ENCODE measurements at regions of chr3 and their contacts with region 1.

Region 1: GRCh38 chr3:59027607-59028006 is 22.2 kb downstream of the CFAP20DC start:
- DNase-seq: no peak
- ATAC-seq: peak; percentile 53
- H3K4me3 ChIP-seq: no peak overlapping the region
- H3K27ac ChIP-seq: no peak overlapping the region
- H3K4me1 ChIP-seq: no peaks in the 10 kb centered on the region
- H3K27me3 ChIP-seq: no peaks in the 10 kb centered on the region
- CTCF ChIP-seq: no peak
- EP300 ChIP-seq: no peak
- POLR2A ChIP-seq: no peak
- RAD21 ChIP-seq: no peak

Region 2: DNA sequence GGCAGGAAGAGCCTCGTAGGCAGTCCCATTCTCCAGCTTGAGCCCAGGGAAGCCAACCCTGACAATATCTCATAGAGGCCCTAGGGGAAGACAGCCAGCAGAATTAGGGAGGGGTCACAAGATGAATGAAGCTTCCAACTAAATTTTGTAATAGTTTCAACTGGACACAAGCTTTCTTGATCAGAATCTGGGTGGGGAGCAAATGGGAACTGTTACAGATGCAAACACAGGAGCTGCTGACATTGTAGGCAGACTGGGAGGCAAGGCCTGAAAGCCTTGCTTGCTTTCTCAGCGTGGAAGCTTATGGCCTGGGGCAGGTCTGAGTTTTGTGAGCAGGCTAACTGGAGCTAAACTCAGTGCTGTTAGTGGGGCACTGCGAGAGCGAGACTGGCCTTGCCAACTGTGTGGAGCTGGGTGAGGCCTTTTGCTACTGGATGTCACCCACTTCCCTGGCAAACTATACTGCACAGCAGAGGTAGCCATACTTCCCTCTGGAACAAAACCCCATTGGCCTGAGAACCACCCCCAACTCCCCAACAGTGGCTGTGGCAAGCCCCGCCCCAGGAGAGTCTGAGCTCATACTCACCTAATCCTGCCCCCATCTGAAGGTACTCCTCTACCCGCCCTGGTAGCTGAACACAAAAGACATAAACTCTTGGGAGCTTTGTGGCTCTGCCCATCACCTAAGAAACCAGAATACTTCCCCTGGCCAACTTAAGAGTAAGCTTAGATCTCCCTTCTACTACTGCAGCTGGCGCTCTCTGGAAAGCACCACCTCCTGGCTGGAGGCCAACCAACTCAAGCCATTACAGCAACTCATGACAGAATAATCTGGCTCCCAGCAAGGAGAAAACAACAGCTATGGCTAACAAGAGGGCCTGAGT is 20.7 kb before region 1 on chr3:
- CTCF ChIA-PET with region 1: interaction called, 5 read pairs
- POLR2A ChIA-PET with region 1: no interaction called
- RAD21 ChIA-PET with region 1: interaction called, 4 read pairs
- SMC1A ChIA-PET with region 1: interaction called, 10 read pairs
- in situ Hi-C with region 1: no loop called
- intact Hi-C with region 1: no loop called
- DNase-seq: no peak
- ATAC-seq: peak; percentile 84
- H3K4me3 ChIP-seq: no peak overlapping the region
- H3K27ac ChIP-seq: no peak overlapping the region
- H3K4me1 ChIP-seq: no peaks in the 10 kb centered on the region
- H3K27me3 ChIP-seq: no peaks in the 10 kb centered on the region
- CTCF ChIP-seq: no peak
- EP300 ChIP-seq: no peak
- POLR2A ChIP-seq: no peak
- RAD21 ChIP-seq: no peak

Region 3: DNA sequence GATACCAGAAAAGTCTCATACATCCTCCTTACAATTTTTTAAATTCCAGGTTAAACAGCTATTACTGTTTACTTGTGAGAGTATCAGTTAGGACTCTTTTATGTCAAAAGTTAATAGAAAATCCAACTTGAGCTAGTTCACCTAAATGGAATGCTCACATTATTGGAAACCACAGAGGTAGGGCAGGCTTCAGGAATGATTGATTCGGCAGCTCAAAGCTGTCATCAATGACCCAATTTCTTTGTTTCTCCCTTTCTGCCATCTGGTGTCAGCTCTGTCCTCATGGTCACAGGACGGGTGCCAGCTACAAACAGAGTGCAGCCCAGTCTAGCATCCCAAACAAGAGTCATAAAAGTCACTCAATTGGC is 10.0 kb before region 1 on chr3:
- CTCF ChIA-PET with region 1: interaction called, 5 read pairs
- POLR2A ChIA-PET with region 1: no interaction called
- RAD21 ChIA-PET with region 1: no interaction called
- SMC1A ChIA-PET with region 1: interaction called, 16 read pairs
- in situ Hi-C with region 1: no loop called
- intact Hi-C with region 1: no loop called
- DNase-seq: no peak
- ATAC-seq: no peak
- H3K4me3 ChIP-seq: no peak overlapping the region
- H3K27ac ChIP-seq: no peak overlapping the region
- H3K4me1 ChIP-seq: no peaks in the 10 kb centered on the region
- H3K27me3 ChIP-seq: no peaks in the 10 kb centered on the region
- CTCF ChIP-seq: no peak
- EP300 ChIP-seq: no peak
- POLR2A ChIP-seq: no peak
- RAD21 ChIP-seq: no peak

Region 4: GRCh38 chr3:59043391-59043790 is 15.8 kb after region 1 on chr3:
- CTCF ChIA-PET with region 1: interaction called, 3 read pairs
- POLR2A ChIA-PET with region 1: interaction called, 3 read pairs
- RAD21 ChIA-PET with region 1: interaction called, 3 read pairs
- SMC1A ChIA-PET with region 1: interaction called, 12 read pairs
- in situ Hi-C with region 1: no loop called
- intact Hi-C with region 1: no loop called
- DNase-seq: no peak
- ATAC-seq: peak; percentile 52
- H3K4me3 ChIP-seq: no peak overlapping the region
- H3K27ac ChIP-seq: no peak overlapping the region
- H3K4me1 ChIP-seq: no peaks in the 10 kb centered on the region
- H3K27me3 ChIP-seq: no peaks in the 10 kb centered on the region
- CTCF ChIP-seq: no peak
- EP300 ChIP-seq: no peak
- POLR2A ChIP-seq: no peak
- RAD21 ChIP-seq: no peak